Transverse colon (tissue), 4 donors: ENCODE measurements at regions of chr6 and their contacts with region 1.

Region 1: GRCh38 chr6:66687611-66688140 is 980.6 kb upstream of the EYS start:
- DNase-seq: no peak
- H3K4me3 ChIP-seq: no peak overlapping the region
- H3K27ac ChIP-seq: no peak overlapping the region
- H3K4me1 ChIP-seq: no peaks in the 10 kb centered on the region
- H3K27me3 ChIP-seq: no peaks in the 10 kb centered on the region
- CTCF ChIP-seq: no peak
- EP300 ChIP-seq: no peak
- POLR2A ChIP-seq: no peak

Region 2: GRCh38 chr6:66699385-66699784 is 11.7 kb after region 1 on chr6:
- in situ Hi-C with region 1: no loop called
- intact Hi-C with region 1: loop called (anchors 1 kb)
- DNase-seq: no peak
- H3K4me3 ChIP-seq: no peak overlapping the region
- H3K27ac ChIP-seq: no peak overlapping the region
- H3K4me1 ChIP-seq: no peaks in the 10 kb centered on the region
- H3K27me3 ChIP-seq: no peaks in the 10 kb centered on the region
- CTCF ChIP-seq: no peak
- EP300 ChIP-seq: no peak
- POLR2A ChIP-seq: no peak

Region 3: DNA sequence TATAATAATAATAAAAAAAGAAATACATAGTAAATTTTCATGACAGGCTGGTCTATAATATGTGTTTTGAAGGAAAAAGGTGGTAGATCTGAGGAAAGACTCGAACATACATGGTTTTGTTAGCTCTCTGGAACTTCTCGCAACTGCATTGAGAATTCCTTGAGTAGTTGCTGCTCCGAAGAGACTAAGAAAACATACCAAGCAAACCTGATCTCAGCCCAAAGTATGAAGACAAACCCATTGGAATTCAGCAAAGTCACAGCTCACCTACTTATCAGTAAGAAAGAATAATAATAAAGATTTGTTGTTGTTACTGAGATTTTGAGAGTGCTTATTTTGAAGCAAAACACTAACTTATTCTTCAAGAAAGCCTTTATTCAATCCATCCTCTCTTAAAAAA is 126.5 kb after region 1 on chr6:
- in situ Hi-C with region 1: no loop called
- intact Hi-C with region 1: no loop called
- DNase-seq: no peak
- H3K4me3 ChIP-seq: no peak overlapping the region
- H3K27ac ChIP-seq: no peak overlapping the region
- H3K4me1 ChIP-seq: no peaks in the 10 kb centered on the region
- H3K27me3 ChIP-seq: no peaks in the 10 kb centered on the region
- CTCF ChIP-seq: no peak
- EP300 ChIP-seq: no peak
- POLR2A ChIP-seq: no peak